ENCODE measurements at regions of chr16 and their contacts with region 1.

Region 1: GRCh38 chr16:68229431-68230198 is 6.3 kb downstream of the ESRP2 start:
- DNase-seq: peak in 2 of 5 donors; percentile 29 to 46
- ATAC-seq: peak; percentile 11 to 55 (median 36)
- H3K4me3 ChIP-seq: no peak overlapping the region
- H3K27ac ChIP-seq: peak overlapping the region in 2 of 12 donors; percentile 4 to 14
- H3K4me1 ChIP-seq: peaks cover 0 to 30% (median 15%) of the 10 kb centered on the region in 12 donors
- H3K27me3 ChIP-seq: no peaks in the 10 kb centered on the region
- CTCF ChIP-seq: peak; percentile 80 to 94 (median 90)
- POLR2A ChIP-seq: no peak

Region 2: DNA sequence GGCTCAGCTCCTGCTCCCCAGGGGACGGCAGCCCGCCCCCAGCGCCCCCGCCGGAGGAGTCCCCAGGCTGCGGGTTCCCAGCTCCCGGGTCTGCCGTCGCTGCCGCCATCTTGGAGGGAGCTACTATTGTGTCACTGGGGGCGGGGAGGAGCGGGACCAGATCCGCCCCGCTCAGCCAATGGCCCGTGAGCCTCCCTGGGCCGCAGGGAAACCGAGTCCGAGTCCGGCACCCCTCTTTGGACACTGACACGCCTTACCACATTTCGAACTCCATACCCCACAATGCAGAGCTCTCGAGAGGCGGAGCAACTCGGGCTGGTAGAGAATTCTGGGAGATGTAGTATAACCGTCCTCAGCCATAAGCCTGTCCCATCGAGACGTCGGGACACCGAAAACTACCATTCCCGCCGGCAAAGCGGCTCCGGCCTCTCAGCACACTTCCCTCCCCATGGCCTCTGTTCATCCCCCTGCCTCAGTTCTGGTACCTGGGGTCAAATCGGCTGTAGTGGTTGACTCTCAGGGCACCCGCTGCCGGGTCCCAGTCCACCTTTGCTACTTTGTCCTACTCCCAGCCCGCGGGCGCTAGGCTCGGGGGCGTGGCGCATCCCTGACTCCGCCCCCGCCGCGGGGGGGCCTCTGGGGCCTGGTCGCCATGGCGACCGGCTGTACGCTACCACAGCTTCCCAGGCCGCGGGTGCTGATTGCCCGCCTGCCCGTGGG is 423.0 kb before region 1 on chr16 and contains the starts of genes RANBP10 and TSNAXIP1:
- intact Hi-C with region 1: loop called in 4 of 10 experiments (anchors 10 kb)
- DNase-seq: peak; percentile 97 to 98 (median 98)
- ATAC-seq: peak; percentile 98 to 99 (median 98)
- H3K4me3 ChIP-seq: peak within 1 kb of the TSS; percentile 62 to 98 (median 80)
- H3K27ac ChIP-seq: peak within 1 kb of the TSS in 11 of 12 donors; percentile 68 to 93 (median 84)
- H3K4me1 ChIP-seq: peaks cover 0 to 39% (median 17%) of the 10 kb centered on the region in 12 donors
- H3K27me3 ChIP-seq: no peaks in the 10 kb centered on the region
- CTCF ChIP-seq: no peak
- POLR2A ChIP-seq: peak in 1 of 2 donors; percentile 91
- total RNA-seq, gene RANBP10: 7.1 to 19.7 (median 12.3) TPM
- total RNA-seq, gene TSNAXIP1: 0.16 to 0.93 (median 0.46) TPM in 8 of 9 donors, not detected in the other

Region 3: DNA sequence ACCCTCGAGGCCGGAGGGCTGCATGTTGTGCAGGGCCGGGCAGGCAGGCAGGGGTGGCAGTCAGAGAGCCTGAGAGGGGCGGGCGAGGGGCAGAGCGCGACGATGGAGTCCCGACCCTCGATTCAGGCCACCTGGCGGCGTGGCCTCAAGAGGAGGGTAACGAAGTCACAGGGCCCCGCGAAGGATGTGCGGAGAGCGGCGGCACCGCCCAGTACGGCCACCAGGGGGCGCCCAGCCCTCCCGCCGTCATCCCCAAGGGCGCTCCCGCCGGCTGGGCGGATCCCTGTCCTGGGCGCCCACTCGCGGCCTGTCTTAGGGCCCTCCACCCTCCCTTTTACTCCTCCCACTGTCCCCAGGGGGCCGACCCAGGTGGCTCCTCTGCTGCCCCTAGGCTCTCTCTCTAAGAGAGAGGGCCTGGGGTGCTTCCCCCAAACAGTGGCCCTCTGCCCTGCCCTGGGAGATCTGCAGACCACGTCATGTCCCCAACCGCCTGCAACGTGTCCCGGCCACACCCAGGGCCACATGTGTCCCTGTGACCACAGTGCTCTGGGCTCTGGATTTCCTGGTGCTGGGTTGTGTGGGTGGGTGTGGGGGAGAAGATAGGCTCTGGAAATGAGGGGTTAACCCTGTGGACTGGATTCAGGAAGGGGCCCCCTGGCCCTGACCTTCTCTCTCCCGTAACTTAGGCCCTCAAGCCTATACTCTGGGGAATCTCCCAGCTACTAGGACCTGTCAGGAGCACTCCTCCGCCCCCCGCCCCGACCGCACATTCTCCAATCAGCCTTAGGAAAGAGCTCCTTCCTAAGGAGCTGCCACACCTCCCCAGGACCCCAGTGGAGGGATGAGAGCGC is 236.2 kb before region 1 on chr16:
- intact Hi-C with region 1: loop called in 6 of 10 experiments (anchors 1 to 10 kb)
- DNase-seq: peak; percentile 83 to 92 (median 88)
- ATAC-seq: peak; percentile 90 to 95 (median 94)
- H3K4me3 ChIP-seq: peak overlapping the region in 10 of 12 donors; percentile 3 to 54 (median 47)
- H3K27ac ChIP-seq: peak overlapping the region; percentile 43 to 88 (median 81)
- H3K4me1 ChIP-seq: peaks cover 0 to 36% (median 9%) of the 10 kb centered on the region in 12 donors
- H3K27me3 ChIP-seq: no peaks in the 10 kb centered on the region
- CTCF ChIP-seq: peak; percentile 97 to 100 (median 100)
- POLR2A ChIP-seq: peak in 1 of 2 donors; percentile 29

Region 4: DNA sequence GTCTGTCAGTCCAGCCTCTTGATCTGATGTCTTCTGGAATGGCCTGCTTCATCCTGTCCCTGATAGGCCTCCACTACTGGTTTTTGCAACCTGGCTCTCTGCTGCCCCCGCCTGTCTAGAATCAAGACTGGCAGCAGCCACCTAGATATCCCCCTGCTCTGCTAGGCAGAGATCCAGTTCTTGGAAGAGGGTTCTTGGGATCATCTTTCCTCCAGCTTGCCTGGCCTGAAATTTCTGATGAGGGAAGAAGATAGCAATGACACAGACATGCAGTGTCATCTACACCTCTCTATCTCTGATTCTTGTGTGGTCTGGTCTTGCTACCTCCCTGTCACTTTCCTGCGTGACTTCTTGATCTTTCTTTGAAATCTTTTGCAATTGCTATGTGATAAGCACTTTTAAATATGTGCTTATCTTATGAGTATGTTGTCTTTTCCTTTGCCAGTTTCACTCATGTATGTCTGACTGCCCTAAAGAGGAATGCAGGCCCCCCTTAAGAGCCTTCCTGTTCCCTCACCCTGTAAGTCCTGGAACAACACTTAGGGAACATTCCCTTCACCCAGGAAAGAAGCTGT is 164.7 kb before region 1 on chr16:
- intact Hi-C with region 1: loop called in 1 of 10 experiments (anchors 10 kb)
- DNase-seq: peak; percentile 59 to 82 (median 75)
- ATAC-seq: peak; percentile 49 to 80 (median 78)
- H3K4me3 ChIP-seq: no peak overlapping the region
- H3K27ac ChIP-seq: peak overlapping the region in 10 of 12 donors; percentile 5 to 76 (median 32)
- H3K4me1 ChIP-seq: peaks cover 0 to 49% (median 19%) of the 10 kb centered on the region in 12 donors
- H3K27me3 ChIP-seq: no peaks in the 10 kb centered on the region
- CTCF ChIP-seq: peak; percentile 67 to 87 (median 79)
- POLR2A ChIP-seq: no peak

Region 5: DNA sequence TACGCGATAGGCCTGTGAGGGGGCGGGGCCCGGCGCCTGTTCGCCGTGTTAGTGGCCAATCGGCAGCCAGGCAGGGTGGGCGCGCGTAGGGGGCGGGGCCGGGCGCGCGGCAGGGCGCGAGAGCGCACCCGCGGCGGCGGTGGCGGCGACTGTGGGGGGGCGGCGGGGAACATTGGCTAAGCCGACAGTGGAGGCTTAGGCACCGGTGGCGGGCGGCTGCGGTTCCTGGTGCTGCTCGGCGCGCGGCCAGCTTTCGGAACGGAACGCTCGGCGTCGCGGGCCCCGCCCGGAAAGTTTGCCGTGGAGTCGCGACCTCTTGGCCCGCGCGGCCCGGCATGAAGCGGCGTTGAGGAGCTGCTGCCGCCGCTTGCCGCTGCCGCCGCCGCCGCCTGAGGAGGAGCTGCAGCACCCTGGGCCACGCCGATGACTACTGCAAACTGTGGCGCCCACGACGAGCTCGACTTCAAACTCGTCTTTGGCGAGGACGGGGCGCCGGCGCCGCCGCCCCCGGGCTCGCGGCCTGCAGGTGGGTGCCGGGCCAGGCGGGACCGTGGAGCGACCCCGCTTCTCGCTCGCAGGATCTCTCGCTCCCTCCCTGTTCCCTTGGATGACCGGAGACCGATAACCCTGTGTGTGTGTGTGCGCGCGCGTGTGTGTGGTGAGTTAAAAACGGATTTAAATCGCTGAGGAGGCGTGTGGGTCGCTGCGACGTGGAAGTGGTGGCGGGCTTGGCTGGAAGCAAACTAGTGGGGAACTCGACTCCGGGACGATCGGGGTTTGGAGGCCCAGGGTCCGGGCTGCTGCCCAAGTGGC is 144.2 kb before region 1 on chr16 and contains the start of gene NFATC3:
- intact Hi-C with region 1: loop called in 7 of 10 experiments (anchors 5 to 10 kb)
- DNase-seq: peak; percentile 99
- ATAC-seq: peak; percentile 87 to 93 (median 90)
- H3K4me3 ChIP-seq: peak within 1 kb of the TSS; percentile 70 to 95 (median 88)
- H3K27ac ChIP-seq: peak within 1 kb of the TSS; percentile 96 to 99 (median 98)
- H3K4me1 ChIP-seq: peaks cover 0 to 78% (median 55%) of the 10 kb centered on the region in 12 donors
- H3K27me3 ChIP-seq: no peaks in the 10 kb centered on the region
- CTCF ChIP-seq: peak in 2 of 12 donors; percentile 16 to 29
- POLR2A ChIP-seq: peak in 1 of 2 donors; percentile 83
- total RNA-seq, gene NFATC3: 20.6 to 35.1 (median 28.8) TPM

Region 6: GRCh38 chr16:68093816-68094613 is 135.6 kb before region 1 on chr16:
- intact Hi-C with region 1: loop called in 9 of 10 experiments (anchors 2 to 10 kb)
- DNase-seq: no peak
- ATAC-seq: peak; percentile 56 to 73 (median 63)
- H3K4me3 ChIP-seq: no peak overlapping the region
- H3K27ac ChIP-seq: peak overlapping the region in 1 of 12 donors; percentile 13
- H3K4me1 ChIP-seq: peaks cover 0 to 71% (median 43%) of the 10 kb centered on the region in 12 donors
- H3K27me3 ChIP-seq: no peaks in the 10 kb centered on the region
- CTCF ChIP-seq: peak; percentile 12 to 64 (median 41)
- POLR2A ChIP-seq: no peak

Region 7: GRCh38 chr16:68179196-68179795 is 50.3 kb before region 1 on chr16:
- intact Hi-C with region 1: no loop called
- DNase-seq: no peak
- ATAC-seq: peak in 2 of 4 donors; percentile 28 to 50
- H3K4me3 ChIP-seq: no peak overlapping the region
- H3K27ac ChIP-seq: no peak overlapping the region
- H3K4me1 ChIP-seq: peaks cover 0 to 4% (median 0%) of the 10 kb centered on the region in 12 donors
- H3K27me3 ChIP-seq: no peaks in the 10 kb centered on the region
- CTCF ChIP-seq: no peak
- POLR2A ChIP-seq: no peak

Region 8: DNA sequence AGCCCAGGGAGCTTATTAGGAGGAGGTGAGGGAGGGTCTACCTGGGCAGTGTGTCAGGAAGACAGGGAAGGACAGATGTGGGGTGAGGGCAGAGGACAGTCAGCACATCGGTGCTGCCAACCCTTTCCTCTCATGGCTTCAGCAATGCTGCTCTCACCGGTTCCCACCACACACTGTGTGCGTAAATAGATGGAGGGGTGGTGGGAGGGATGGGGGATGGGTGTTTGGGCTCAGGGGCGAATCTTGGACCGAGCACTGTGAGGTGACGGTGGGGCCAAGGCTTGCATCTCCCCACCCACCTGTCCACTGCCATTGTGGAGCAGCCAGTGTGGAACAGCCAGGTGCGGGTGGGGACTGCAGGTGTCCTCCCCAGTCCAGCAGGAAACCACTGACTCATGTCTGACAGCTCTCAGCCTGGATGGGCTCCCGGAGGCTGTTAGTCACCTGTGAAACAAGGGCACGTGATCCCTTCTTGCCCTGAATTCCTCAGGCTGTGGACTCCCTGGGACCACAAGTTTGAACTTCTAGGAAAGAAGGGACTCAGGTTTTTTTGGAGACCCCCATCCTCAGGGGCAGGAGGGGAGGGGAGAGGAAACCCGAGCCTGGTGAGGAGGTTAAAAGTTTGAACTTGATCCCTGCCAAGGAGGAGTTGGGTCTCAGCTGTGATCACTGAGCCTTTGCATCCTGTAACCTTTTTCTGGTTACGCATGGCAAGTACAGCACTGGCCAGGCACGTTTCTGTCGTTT is 261.4 kb after region 1 on chr16:
- intact Hi-C with region 1: no loop called
- DNase-seq: no peak
- ATAC-seq: peak in 1 of 4 donors; percentile 11
- H3K4me3 ChIP-seq: no peak overlapping the region
- H3K27ac ChIP-seq: no peak overlapping the region
- H3K4me1 ChIP-seq: no peaks in the 10 kb centered on the region
- H3K27me3 ChIP-seq: peaks cover 0 to 6% (median 0%) of the 10 kb centered on the region in 9 donors
- CTCF ChIP-seq: no peak
- POLR2A ChIP-seq: no peak